ENCODE measurements at regions of chr10 and their contacts with region 1.

Region 1: DNA sequence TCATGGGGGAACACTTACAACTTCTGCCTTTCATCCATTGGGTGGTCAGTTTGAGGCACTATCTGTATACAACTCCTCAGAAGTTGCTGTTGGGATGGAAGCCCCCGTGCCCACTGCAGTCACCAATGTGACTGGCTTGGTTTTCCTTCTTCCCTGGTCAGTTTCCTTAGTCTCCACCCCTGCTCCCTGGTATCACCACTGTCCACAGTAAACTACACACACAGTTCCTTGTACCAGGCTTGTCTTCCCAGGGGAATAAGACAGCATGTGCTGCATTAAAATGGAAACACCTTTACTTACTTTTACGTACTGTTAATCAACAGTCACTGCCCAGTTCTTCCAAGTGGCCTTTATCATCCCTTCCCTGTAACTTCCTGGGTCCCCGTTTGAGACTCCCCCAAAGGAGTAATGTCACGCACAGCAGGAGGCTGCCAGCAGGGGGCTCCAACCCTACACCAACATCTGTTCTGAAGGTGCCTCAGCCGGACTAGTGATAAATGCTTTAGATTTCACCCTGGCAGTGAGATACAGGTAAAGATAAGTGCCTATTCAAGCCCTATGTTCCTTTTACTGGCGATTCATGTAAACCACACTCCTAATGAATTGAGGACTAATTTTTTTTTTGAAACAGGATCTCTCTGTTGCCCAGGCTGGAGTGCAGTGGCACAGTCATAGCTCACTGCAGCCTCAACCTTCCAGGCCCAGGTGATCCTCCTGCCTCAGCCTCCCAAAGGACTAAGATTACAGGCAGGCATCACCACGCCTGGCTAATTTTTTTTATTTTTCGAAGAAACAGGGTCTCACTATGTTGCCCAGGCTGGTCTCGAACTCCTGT is 45.3 kb upstream of the PIK3AP1 start:
- DNase-seq: peak; percentile 53 to 69 (median 56)
- ATAC-seq: peak; percentile 88
- H3K4me3 ChIP-seq: no peak overlapping the region
- H3K27ac ChIP-seq: no peak overlapping the region
- H3K4me1 ChIP-seq: peaks cover 9 to 17% of the 10 kb centered on the region in 2 experiments; a peak in 4 of 5 replicates
- H3K27me3 ChIP-seq: no peaks in the 10 kb centered on the region
- CTCF ChIP-seq: peak; percentile 67 to 84 (median 70)
- EP300 ChIP-seq: no peak
- POLR2A ChIP-seq: no peak
- RAD21 ChIP-seq: peak; percentile 24 to 45; a peak in 3 of 4 replicates

Region 2: DNA sequence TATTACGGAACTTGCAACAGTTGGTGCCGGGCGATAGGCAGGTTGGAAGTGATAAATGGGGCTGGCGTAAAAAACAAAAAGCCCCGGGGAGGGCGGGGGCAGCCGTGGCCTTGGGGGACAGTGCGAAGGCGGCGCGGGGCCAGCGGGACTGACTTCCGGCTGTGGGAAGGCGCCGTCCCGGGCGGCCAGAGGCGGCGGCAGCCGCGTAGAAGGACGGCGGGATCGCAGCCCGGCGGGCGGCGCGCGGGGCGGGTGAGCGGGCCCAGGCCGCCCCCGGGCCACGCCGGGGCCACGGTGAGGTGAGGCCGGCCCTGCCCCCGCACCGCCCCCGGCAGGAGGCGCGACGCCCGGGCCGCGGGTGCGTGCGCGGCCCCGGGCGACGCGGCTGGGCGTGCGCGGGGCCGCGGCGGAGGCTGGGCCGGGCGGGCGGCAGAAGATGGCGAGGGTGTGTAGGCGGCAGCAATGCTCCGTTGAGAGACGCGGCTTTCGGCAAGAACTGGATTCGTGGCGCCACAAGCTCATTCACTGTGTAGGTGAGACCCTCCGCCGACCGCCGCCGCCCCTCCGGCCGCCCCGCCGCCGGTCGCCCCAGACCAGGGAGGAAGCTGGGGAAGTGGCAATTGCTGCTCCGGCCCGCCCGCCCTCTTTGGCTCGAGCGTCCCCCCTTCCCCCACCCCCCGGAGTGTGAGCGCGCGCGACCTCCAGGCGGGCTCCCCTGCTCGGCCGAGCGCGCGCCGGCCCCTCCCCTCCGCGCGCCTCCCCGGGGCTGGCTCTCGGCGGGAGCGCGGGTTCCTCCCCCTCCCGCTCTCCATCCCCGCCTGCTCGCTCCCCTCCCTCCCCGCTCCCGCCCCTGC is 66.5 kb after region 1 on chr10 and contains the start of gene LCOR:
- CTCF ChIA-PET with region 1: interaction called, 3 read pairs
- POLR2A ChIA-PET with region 1: no interaction called
- in situ Hi-C with region 1: no loop called
- intact Hi-C with region 1: loop called (anchors 2 kb)
- DNase-seq: peak; percentile 85 to 93 (median 89)
- ATAC-seq: peak; percentile 79
- H3K4me3 ChIP-seq: peak within 1 kb of the TSS; percentile 79
- H3K27ac ChIP-seq: peak within 1 kb of the TSS; percentile 97
- H3K4me1 ChIP-seq: peaks cover 13 to 31% of the 10 kb centered on the region in 2 experiments; a peak in 4 of 5 replicates
- H3K27me3 ChIP-seq: no peaks in the 10 kb centered on the region
- CTCF ChIP-seq: no peak; a peak in 1 of 6 replicates
- EP300 ChIP-seq: peak; percentile 81
- POLR2A ChIP-seq: peak; percentile 71
- RAD21 ChIP-seq: no peak
- polyA plus RNA-seq, gene LCOR: 3.6 to 7.2 TPM

Region 3: DNA sequence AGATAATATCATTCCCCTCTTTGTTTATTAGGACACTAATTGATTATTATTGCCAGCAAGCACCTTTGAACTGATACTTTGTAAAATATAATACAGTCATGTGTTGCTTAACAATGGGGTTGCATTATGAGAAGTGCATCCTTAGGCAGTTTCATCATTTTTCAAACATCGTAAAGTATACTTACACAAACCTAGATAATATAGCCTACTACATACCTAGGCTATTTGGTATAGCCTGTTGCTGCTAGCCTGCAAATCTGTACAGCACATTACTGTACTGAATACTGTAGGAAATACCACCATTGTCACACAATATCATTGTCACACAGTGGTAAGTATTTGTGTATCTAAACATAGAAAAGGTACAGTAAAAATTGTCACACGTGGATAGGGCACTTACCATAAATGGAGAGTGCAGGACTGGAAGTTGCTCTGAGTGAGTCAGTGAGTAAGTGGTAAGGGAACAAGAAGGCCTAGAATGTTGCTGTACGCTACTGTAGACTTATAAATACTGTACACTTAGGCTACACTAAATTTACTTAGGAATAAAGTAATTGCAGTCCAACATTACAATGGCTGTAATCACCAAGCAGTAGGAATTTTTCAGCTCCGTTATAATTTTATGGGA is 137.2 kb after region 1 on chr10:
- CTCF ChIA-PET with region 1: no interaction called
- POLR2A ChIA-PET with region 1: no interaction called
- in situ Hi-C with region 1: no loop called
- intact Hi-C with region 1: loop called (anchors 10 kb)
- DNase-seq: no peak
- ATAC-seq: peak; percentile 49; the same call in 2 of the 3 replicates
- H3K4me3 ChIP-seq: no peak overlapping the region
- H3K27ac ChIP-seq: no peak overlapping the region
- H3K4me1 ChIP-seq: no peaks in the 10 kb centered on the region
- H3K27me3 ChIP-seq: no peaks in the 10 kb centered on the region
- CTCF ChIP-seq: no peak
- EP300 ChIP-seq: no peak
- POLR2A ChIP-seq: no peak
- RAD21 ChIP-seq: no peak